ENCODE measurements at regions of chr2 and their contacts with region 1.

Region 1: DNA sequence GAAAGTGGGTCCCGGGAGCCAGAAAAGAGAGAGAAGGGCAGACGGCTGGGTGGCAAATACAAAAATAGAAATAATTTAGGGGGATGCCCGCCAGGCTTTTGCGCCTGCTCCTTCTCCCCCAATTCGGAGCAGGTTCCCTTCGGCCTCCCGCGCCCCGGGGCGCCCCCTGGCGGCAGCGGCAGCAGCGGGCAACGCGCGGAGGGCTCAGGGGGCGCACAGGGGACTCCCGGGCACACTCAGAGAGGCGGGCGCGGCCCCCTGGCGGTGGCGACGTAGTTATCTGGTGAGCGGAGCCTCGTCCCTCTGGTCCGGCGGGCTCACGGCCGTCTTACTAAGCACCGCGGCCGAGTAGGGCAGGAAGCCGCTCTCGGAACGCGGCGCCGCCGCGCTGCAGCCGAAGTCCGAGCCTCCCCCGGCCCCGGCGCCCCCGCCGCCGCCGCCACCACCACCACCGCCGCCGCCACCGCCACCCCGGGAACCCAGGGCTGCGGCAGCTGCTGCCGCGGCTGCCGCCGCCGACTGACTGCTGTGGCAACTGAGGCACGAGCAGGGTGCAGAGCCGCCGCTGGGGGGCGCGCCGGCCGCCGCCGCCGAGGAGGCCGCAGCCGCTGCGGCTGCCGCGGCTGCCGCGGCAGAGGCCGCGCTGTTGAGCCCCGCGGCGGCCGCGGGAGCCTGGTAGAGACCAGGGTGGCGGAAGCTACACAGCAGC is 3.8 kb downstream of the EVX2 start:
- DNase-seq: peak; percentile 45 to 80
- ATAC-seq: peak; percentile 76 to 88 (median 81)
- H3K4me3 ChIP-seq: peak overlapping the region; percentile 58
- H3K27ac ChIP-seq: no peak overlapping the region
- H3K4me1 ChIP-seq: peaks cover 19% of the 10 kb centered on the region
- H3K27me3 ChIP-seq: peaks cover 14 to 98% (median 57%) of the 10 kb centered on the region in 3 donors
- CTCF ChIP-seq: peak; percentile 87

Region 2: DNA sequence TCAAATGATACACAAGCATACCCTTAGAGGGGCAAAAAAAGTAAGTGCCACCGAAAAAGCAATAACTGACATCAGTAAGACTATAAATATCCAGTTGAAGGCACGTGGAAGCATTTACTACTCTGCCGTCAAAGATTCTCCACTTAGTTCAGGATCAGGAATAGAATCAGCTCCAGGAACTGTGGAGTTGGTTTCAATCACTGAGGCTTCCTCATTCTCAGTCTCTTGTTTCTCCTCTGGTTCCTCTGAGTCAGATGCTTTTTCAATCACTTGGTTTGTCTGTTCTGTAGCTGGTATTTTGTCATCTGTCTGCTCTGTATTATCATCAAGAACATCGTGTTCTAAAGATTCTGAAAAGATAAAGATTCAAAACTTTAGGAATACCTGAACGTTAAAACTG is 150.1 kb before region 1 on chr2:
- intact Hi-C with region 1: no loop called
- DNase-seq: no peak
- ATAC-seq: peak; percentile 95 to 96 (median 96)
- H3K4me3 ChIP-seq: no peak overlapping the region
- H3K27ac ChIP-seq: peak overlapping the region; percentile 85
- H3K4me1 ChIP-seq: peaks cover 54% of the 10 kb centered on the region
- H3K27me3 ChIP-seq: no peaks in the 10 kb centered on the region
- CTCF ChIP-seq: no peak

Region 3: DNA sequence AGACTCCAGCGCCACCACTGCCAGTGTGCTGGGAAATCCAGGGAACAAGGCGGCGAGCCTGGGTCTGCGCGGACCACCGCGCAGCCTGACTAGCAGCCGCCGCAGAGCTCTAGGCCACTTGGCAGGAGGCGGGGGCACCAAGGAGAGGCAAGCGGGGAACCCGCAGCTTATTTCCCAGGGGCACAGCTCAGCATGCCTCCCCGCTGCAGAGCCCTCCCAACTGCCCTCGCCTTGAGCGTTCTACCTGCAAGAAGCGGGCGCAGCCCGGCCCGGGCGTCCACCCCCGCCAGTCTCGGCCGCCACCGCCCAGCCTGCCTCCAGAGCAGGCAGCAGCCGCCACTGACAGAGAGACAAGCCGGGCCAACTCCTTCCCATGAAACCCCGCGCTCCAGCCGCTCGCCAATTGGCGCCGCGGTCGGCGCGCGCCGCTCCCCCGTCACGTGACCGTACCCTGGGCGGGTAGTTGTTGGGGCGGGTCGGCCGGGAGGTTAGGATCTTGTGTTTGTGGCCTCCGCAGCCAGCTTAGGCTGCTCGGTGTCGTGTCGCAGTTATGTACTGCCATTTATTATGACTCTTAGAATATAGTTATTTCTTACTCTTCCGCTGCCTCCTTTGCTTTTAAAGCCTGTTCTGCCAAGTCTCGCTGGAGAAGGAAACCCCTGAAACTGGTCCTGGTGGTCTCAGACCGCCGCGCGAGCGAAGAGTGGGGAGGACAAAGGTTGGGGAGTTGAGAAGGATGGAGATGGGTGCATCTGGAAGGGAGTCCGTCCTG is 77.9 kb before region 1 on chr2 and contains the start of gene LNPK:
- intact Hi-C with region 1: loop called in 1 of 2 experiments (anchors 5 kb)
- DNase-seq: peak; percentile 93 to 97
- ATAC-seq: peak; percentile 91 to 95 (median 93)
- H3K4me3 ChIP-seq: peak within 1 kb of the TSS; percentile 91
- H3K27ac ChIP-seq: peak within 1 kb of the TSS; percentile 98
- H3K4me1 ChIP-seq: peaks cover 42% of the 10 kb centered on the region
- H3K27me3 ChIP-seq: no peaks in the 10 kb centered on the region
- CTCF ChIP-seq: no peak
- total RNA-seq, gene LNPK: 42.1 to 65.6 (median 51.4) TPM

Region 4: DNA sequence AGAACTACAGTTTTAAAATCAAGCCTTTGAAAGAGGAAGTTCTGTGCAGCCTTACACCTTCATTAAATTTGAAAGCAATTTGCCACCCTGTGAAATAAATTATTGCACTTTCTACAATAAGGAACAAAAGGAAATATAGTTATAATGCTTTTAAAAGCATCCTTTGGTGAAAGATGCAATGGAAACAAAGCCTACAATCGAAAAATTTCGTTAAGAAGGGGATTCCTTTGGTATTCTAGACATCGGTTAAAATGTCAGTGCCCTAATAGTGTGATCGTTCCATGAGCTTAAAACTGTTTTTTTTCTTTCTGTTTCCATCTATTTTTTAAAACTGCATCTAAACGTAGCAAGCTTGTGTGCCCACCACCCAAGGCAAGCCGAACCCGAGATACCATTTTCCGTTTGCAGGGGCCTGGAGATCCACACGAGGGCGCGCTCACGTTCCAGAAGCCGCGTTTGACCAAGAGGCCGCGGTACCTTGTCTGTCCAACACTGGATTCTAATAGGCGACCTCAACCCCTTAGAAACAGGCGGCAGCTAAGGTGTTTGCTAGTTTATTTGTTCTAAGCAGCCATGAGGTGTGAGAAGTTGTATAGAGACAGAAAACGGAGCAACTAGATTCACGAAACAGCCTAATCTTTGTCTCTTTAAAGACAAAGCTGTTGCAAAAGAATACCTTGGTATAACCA is 31.1 kb after region 1 on chr2:
- intact Hi-C with region 1: loop called in 1 of 2 experiments (anchors 5 kb)
- DNase-seq: no peak
- ATAC-seq: peak in 3 of 4 donors; percentile 36 to 54 (median 43)
- H3K4me3 ChIP-seq: no peak overlapping the region
- H3K27ac ChIP-seq: no peak overlapping the region
- H3K4me1 ChIP-seq: peaks cover 4% of the 10 kb centered on the region
- H3K27me3 ChIP-seq: peaks cover 2 to 99% (median 64%) of the 10 kb centered on the region in 3 donors
- CTCF ChIP-seq: peak; percentile 60

Region 5: DNA sequence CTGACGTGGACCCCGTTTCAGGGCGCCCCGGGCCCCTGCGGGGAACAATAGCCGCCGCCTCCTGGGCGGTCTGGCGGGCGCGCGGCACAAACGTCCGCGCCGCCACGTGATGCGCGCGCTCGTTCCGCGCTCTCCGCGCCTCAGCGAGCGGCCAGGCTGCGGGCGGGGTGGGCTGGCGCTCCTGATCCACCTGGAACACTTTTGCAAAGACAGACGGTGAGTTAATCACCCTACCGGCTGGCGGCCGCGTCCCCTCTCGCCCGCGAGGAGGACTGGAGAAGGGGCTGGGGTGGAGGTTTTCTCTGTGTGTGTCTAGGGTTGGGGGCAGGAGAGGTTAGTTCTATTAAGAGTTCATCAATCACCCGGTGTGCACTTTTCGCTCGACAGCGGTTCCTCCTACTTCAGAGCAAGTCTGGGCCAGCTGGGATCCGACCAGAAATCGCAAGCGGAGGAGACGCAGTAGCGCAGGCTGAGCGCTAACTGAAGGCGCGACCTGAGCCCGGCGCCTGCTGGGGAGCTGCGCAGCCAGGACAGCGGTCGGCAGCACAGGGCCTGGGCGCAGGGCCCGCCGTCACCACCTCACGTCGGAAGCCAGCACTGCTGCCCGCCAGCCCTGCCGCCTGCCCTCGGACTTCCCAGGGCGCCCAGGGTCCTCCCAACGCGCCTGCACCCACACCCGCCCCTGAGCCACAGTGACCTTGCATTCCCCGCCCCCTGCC is 98.2 kb after region 1 on chr2:
- intact Hi-C with region 1: no loop called
- DNase-seq: no peak
- ATAC-seq: peak; percentile 55 to 68 (median 61)
- H3K4me3 ChIP-seq: peak overlapping the region; percentile 70
- H3K27ac ChIP-seq: peak overlapping the region; percentile 4
- H3K4me1 ChIP-seq: no peaks in the 10 kb centered on the region
- H3K27me3 ChIP-seq: peaks cover 0 to 52% (median 7%) of the 10 kb centered on the region in 3 donors
- CTCF ChIP-seq: no peak

Region 6: GRCh38 chr2:176494949-176495353 is 415.0 kb after region 1 on chr2:
- intact Hi-C with region 1: no loop called
- DNase-seq: peak; percentile 63 to 79
- ATAC-seq: peak in 1 of 4 donors; percentile 4
- H3K4me3 ChIP-seq: no peak overlapping the region
- H3K27ac ChIP-seq: no peak overlapping the region
- H3K4me1 ChIP-seq: peaks cover 15% of the 10 kb centered on the region
- H3K27me3 ChIP-seq: peaks cover 0 to 4% (median 0%) of the 10 kb centered on the region in 3 donors
- CTCF ChIP-seq: no peak

Measured in psoas muscle (tissue), 8 donors.